MCF 10A (cell line): ENCODE measurements at regions of chr15 and their contacts with region 1.

Region 1: DNA sequence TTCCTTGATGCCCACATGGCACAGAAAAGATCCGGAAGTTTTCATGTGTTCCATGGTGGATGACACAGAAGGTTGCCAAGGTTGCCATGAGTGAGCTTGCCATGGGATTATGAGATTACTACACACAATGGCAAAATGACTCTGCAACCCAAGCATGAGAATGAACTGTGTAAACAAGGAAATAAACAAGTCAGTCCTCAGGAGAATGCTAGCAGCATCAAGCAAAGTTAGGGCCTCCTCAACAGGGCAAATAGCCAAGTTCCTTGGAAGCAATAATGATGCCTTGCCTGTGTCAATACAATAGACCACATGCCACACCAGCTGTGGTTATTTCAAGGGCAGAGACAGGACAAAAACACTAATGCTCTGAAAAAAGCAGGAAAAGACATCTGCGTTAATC is 41.8 kb downstream of the AQR start:
- DNase-seq: no peak
- H3K4me3 Mint-ChIP-seq: no peak overlapping the region
- H3K27ac Mint-ChIP-seq: no peak overlapping the region
- H3K4me1 Mint-ChIP-seq: no peaks in the 10 kb centered on the region
- H3K27me3 Mint-ChIP-seq: no peaks in the 10 kb centered on the region
- CTCF ChIP-seq: no peak

Region 2: DNA sequence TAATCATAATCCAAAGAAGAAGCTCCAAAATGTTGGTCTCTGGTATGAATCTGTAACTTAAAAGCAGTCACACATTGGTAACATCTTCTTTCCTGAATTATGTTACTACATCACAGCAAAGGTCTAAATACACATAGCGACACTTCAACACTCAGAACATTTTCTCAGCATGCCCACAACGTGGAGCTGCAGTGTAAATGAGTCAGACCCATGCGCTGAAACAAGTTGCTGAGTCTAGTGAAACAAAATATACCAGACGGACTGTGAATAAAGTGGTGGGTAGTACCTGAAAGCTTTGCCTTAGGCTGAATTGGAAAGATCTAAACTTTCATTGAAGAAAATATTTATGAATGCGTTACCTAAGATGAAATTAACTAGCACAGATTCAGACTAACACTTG is 311.1 kb before region 1 on chr15:
- CTCF ChIA-PET with region 1: interaction called, 141 read pairs
- POLR2A ChIA-PET with region 1: no interaction called
- intact Hi-C with region 1: no loop called
- DNase-seq: peak; percentile 62
- H3K4me3 Mint-ChIP-seq: no peak overlapping the region
- H3K27ac Mint-ChIP-seq: no peak overlapping the region
- H3K4me1 Mint-ChIP-seq: peaks cover 5% of the 10 kb centered on the region
- H3K27me3 Mint-ChIP-seq: peaks cover 55% of the 10 kb centered on the region
- CTCF ChIP-seq: peak; percentile 18